A549 (cell line): ENCODE measurements at regions of chr11 and their contacts with region 1.

Region 1: GRCh38 chr11:123580557-123581275 is 73.7 kb downstream of the SCN3B start:
- DNase-seq: peak; percentile 55 to 65
- ATAC-seq: peak; percentile 64 to 82
- H3K4me3 ChIP-seq: no peak overlapping the region
- H3K27ac ChIP-seq: peak overlapping the region; percentile 60 to 75
- H3K4me1 ChIP-seq: peaks cover 63% of the 10 kb centered on the region
- CTCF ChIP-seq: peak; percentile 75
- EP300 ChIP-seq: no peak
- POLR2A ChIP-seq: no peak
- RAD21 ChIP-seq: peak; percentile 76 to 78

Region 2: GRCh38 chr11:123597859-123598258 is 17.1 kb after region 1 on chr11:
- CTCF ChIA-PET with region 1: interaction called, 29 read pairs
- POLR2A ChIA-PET with region 1: no interaction called
- DNase-seq: no peak
- ATAC-seq: peak in 1 of 2 experiments; percentile 56; a peak in 3 of 6 replicates
- H3K4me3 ChIP-seq: no peak overlapping the region
- H3K27ac ChIP-seq: no peak overlapping the region
- H3K4me1 ChIP-seq: peaks cover 36% of the 10 kb centered on the region
- CTCF ChIP-seq: no peak
- EP300 ChIP-seq: no peak
- POLR2A ChIP-seq: no peak
- RAD21 ChIP-seq: no peak

Region 3: GRCh38 chr11:123611698-123612097 is 31.0 kb after region 1 on chr11:
- CTCF ChIA-PET with region 1: interaction called, 14 read pairs
- POLR2A ChIA-PET with region 1: no interaction called
- DNase-seq: no peak
- ATAC-seq: no peak
- H3K4me3 ChIP-seq: no peak overlapping the region
- H3K27ac ChIP-seq: no peak overlapping the region
- H3K4me1 ChIP-seq: no peaks in the 10 kb centered on the region
- CTCF ChIP-seq: no peak
- EP300 ChIP-seq: no peak
- POLR2A ChIP-seq: no peak
- RAD21 ChIP-seq: no peak